Heart left ventricle (tissue), 16 donors: ENCODE measurements at regions of chr6 and their contacts with region 1.

Region 1: GRCh38 chr6:79782792-79783580 is 151.9 kb downstream of the SH3BGRL2 start:
- DNase-seq: no peak
- ATAC-seq: no peak
- H3K4me3 ChIP-seq: no peak overlapping the region
- H3K27ac ChIP-seq: no peak overlapping the region
- H3K4me1 ChIP-seq: peaks cover 0 to 7% (median 0%) of the 10 kb centered on the region in 12 donors
- H3K27me3 ChIP-seq: no peaks in the 10 kb centered on the region
- CTCF ChIP-seq: no peak
- POLR2A ChIP-seq: no peak

Region 2: GRCh38 chr6:79869600-79870084 is 86.7 kb after region 1 on chr6:
- intact Hi-C with region 1: loop called in 9 of 10 experiments (anchors 2 to 10 kb)
- DNase-seq: peak; percentile 64 to 89 (median 79)
- ATAC-seq: peak; percentile 97 to 100 (median 98)
- H3K4me3 ChIP-seq: peak overlapping the region in 7 of 12 donors; percentile 5 to 45 (median 31)
- H3K27ac ChIP-seq: no peak overlapping the region
- H3K4me1 ChIP-seq: peaks cover 0 to 15% (median 0%) of the 10 kb centered on the region in 12 donors
- H3K27me3 ChIP-seq: peaks cover 0 to 4% (median 0%) of the 10 kb centered on the region in 9 donors
- CTCF ChIP-seq: peak; percentile 80 to 95 (median 89)
- POLR2A ChIP-seq: no peak